ENCODE measurements at regions of chr10 and their contacts with region 1.

Region 1: GRCh38 chr10:101569838-101570766 is 18.0 kb downstream of the POLL start:
- DNase-seq: peak; percentile 70 to 85 (median 80)
- H3K4me3 ChIP-seq: peak overlapping the region; percentile 35
- H3K27ac ChIP-seq: no peak overlapping the region
- H3K4me1 ChIP-seq: peaks cover 6% of the 10 kb centered on the region
- H3K27me3 ChIP-seq: peaks cover 3% of the 10 kb centered on the region
- CTCF ChIP-seq: peak; percentile 60 to 92 (median 70)
- EP300 ChIP-seq: no peak
- POLR2A ChIP-seq: no peak

Region 2: GRCh38 chr10:101214446-101215396 is 355.4 kb before region 1 on chr10:
- intact Hi-C with region 1: loop called (anchors 1 to 2 kb)
- DNase-seq: peak; percentile 39 to 77 (median 61)
- H3K4me3 ChIP-seq: no peak overlapping the region
- H3K27ac ChIP-seq: no peak overlapping the region
- H3K4me1 ChIP-seq: peaks cover 4% of the 10 kb centered on the region
- H3K27me3 ChIP-seq: no peaks in the 10 kb centered on the region
- CTCF ChIP-seq: peak; percentile 45 to 64 (median 53)
- EP300 ChIP-seq: no peak
- POLR2A ChIP-seq: no peak

Region 3: DNA sequence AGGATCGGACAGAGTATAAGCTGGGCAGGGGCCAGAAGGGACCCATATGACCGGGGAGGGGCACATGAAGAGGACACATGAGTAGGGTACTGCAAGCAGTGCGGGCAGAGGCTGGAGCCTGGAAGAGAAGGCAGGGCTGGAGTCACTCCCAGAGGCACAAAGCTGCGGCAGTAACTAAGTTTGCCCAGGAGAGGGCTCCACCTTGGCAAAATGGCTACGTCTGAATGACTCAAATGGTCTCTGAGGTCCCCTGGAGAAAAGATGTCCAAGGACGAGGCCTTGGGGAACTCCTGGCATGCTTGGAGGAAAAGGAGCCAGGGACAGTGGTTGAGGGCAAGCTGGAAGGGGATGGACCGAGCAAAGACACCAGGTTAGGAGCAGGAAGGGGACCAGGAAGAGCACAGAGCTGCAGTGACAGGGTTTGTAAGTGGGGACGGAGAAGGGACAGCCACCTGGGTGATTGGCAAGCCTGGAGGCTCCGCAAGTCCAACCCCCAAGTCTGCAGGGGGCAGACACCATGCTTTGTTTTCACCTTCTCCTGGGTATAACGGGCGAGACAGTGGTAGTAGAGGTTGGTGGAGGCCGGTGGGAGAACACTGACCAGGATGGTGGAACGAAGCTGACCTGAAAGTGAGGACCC is 297.8 kb before region 1 on chr10:
- intact Hi-C with region 1: loop called in 1 of 4 experiments (anchors 10 kb)
- DNase-seq: peak; percentile 28 to 68 (median 54)
- H3K4me3 ChIP-seq: no peak overlapping the region
- H3K27ac ChIP-seq: no peak overlapping the region
- H3K4me1 ChIP-seq: no peaks in the 10 kb centered on the region
- H3K27me3 ChIP-seq: no peaks in the 10 kb centered on the region
- CTCF ChIP-seq: peak in 2 of 3 donors; percentile 36 to 39
- EP300 ChIP-seq: no peak
- POLR2A ChIP-seq: no peak

Measured in ovary (tissue), 10 donors.